ENCODE measurements at regions of chr9 and their contacts with region 1.

Region 1: DNA sequence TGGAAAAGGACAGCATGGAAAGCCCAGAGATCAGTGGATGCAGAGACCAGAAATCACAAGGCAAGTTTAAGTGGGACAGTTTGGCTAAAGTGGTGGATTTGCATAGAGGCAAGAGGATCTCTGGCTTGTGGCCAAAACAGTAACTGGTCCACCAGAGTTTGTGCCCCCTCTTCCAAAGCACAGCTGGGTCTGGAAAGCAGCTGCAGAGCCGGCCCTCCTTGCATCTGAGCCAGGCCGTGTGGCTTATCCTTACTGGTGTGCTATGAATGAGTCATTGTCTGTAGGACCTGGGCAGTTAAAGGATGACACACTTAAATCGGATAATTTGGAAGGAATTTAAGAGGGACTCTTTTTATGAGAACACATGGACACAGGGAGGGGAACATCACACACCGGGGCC is 146.6 kb downstream of the PIP5K1B start:
- DNase-seq: no peak
- ATAC-seq: no peak
- H3K4me3 ChIP-seq: no peak overlapping the region
- H3K27ac ChIP-seq: no peak overlapping the region
- H3K4me1 ChIP-seq: no peaks in the 10 kb centered on the region
- H3K27me3 ChIP-seq: no peaks in the 10 kb centered on the region
- CTCF ChIP-seq: no peak

Region 2: GRCh38 chr9:68619636-68620035 is 232.0 kb before region 1 on chr9:
- intact Hi-C with region 1: loop called in 1 of 2 experiments (anchors 10 kb)
- DNase-seq: no peak
- ATAC-seq: no peak
- H3K4me3 ChIP-seq: no peak overlapping the region
- H3K27ac ChIP-seq: no peak overlapping the region
- H3K4me1 ChIP-seq: no peaks in the 10 kb centered on the region
- H3K27me3 ChIP-seq: no peaks in the 10 kb centered on the region
- CTCF ChIP-seq: no peak

Region 3: DNA sequence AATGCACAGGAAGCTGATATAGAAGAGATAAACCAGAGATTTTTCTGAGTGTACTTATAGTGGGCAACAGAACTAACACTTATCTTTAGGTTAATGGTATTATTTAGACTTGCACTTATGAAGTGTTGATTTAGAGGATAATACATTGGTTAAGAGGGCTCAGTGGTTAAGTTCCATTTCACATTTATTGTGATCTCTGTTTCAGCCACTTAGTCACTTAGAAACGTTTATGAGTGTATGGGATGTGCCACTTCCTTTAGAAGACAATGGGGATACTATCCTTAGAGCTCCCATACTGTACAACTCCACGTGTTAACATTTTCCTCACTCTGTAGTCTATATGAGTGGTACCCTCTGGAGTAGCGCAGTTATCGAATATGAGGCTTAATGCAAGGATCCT is 89.1 kb before region 1 on chr9:
- intact Hi-C with region 1: no loop called
- DNase-seq: no peak
- ATAC-seq: no peak
- H3K4me3 ChIP-seq: no peak overlapping the region
- H3K27ac ChIP-seq: no peak overlapping the region
- H3K4me1 ChIP-seq: no peaks in the 10 kb centered on the region
- H3K27me3 ChIP-seq: no peaks in the 10 kb centered on the region
- CTCF ChIP-seq: no peak

Measured in psoas muscle (tissue), 8 donors.